ENCODE measurements at regions of chr9 and their contacts with region 1.

Region 1: GRCh38 chr9:32571969-32572899 is 725 bp downstream of the NDUFB6 start:
- DNase-seq: peak; percentile 49 to 86 (median 61)
- ATAC-seq: peak; percentile 91
- H3K4me3 ChIP-seq: peak overlapping the region; percentile 87
- H3K4me1 ChIP-seq: peaks cover 16% of the 10 kb centered on the region
- CTCF ChIP-seq: peak; percentile 19

Region 2: DNA sequence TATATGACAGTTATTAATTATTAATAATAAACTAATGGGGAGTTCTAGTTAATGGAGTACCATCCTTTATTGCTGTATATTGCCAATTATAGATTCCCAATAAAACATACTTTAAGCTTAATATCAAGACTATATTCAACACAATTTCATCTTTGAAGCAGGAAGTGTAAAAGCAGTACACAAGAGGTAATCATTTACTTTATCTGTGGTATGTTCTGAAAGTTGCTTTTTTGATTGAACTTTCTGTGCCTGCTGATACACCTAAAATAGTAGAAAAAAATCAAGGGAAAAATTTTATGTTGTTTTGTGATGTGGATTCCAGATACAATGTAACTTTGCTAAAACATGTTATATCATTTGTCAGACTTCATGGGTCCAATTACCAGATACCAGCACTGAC is 129.8 kb before region 1 on chr9:
- intact Hi-C with region 1: no loop called
- DNase-seq: no peak
- ATAC-seq: no peak
- H3K4me3 ChIP-seq: no peak overlapping the region
- H3K4me1 ChIP-seq: no peaks in the 10 kb centered on the region
- CTCF ChIP-seq: no peak

Region 3: GRCh38 chr9:32526041-32526706 is 46.1 kb before region 1 on chr9 and contains the start of gene RIGI:
- intact Hi-C with region 1: loop called in 1 of 2 experiments (anchors 10 kb)
- DNase-seq: peak; percentile 94 to 98 (median 95)
- ATAC-seq: peak; percentile 95
- H3K4me3 ChIP-seq: peak within 1 kb of the TSS; percentile 22
- H3K4me1 ChIP-seq: peaks cover 4% of the 10 kb centered on the region
- CTCF ChIP-seq: peak; percentile 13
- total RNA-seq, gene RIGI: 13.4 to 20.9 (median 14.2) TPM

Measured in mucosa of descending colon (tissue), 3 donors.